SK-N-SH (cell line): ENCODE measurements at regions of chr7 and their contacts with region 1.

Region 1: DNA sequence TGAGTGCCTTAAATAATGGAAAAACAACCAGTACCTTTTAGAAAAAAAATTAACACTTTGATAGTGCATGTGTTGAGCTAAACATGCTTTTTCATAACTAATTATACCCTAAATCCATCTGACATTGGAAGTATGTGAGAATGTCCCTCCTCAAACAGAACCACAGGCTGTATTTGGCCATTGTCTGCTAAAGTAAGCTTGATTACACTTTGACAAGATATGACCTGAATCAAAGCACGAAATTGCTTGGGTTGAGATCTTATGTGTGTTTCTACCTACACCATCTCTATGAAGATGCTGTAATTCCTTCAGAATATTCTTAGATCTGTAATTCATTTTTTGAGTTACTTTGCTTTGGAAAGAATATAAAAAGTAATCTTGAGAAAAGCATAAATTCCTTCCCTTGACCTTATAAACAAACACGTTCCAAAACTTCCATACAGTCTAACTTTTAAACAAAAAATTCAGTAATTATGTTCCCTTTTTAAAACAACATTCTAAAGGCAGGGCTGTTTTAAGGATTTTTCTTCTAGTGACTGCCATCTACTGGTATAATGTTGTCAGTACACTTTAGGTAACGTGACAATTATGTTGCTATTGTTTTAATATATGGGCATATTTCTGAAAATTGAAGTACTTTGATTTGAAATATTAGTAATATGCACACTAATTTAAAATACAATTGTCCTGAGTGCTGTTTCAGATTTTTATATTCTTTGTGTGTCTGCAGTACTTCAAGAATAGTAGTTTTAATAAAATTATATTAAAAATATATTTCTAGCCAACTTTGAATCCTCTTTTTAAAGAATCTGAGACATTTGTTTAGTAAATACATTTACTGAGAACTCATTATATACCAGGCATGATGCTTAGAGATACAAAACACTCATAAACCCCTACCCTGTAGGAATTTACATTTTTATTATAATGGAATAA is 20.9 kb downstream of the CD36 start:
- DNase-seq: peak; percentile 31
- H3K4me3 ChIP-seq: no peak overlapping the region; a peak in 1 of 4 replicates
- H3K27ac ChIP-seq: peak overlapping the region in 1 of 2 experiments; percentile 8; a peak in 1 of 4 replicates
- H3K4me1 ChIP-seq: peaks cover 0 to 4% of the 10 kb centered on the region in 2 experiments; a peak in 1 of 4 replicates
- H3K27me3 ChIP-seq: no peaks in the 10 kb centered on the region
- CTCF ChIP-seq: peak; percentile 97
- EP300 ChIP-seq: no peak
- RAD21 ChIP-seq: peak; percentile 80

Region 2: GRCh38 chr7:80643336-80643915 is 16.0 kb before region 1 on chr7:
- CTCF ChIA-PET with region 1: interaction called, 11 read pairs
- POLR2A ChIA-PET with region 1: no interaction called
- DNase-seq: no peak
- H3K4me3 ChIP-seq: no peak overlapping the region
- H3K27ac ChIP-seq: no peak overlapping the region
- H3K4me1 ChIP-seq: peaks cover 0 to 9% of the 10 kb centered on the region in 2 experiments; a peak in 2 of 4 replicates
- H3K27me3 ChIP-seq: no peaks in the 10 kb centered on the region
- CTCF ChIP-seq: no peak
- EP300 ChIP-seq: no peak
- RAD21 ChIP-seq: no peak

Region 3: DNA sequence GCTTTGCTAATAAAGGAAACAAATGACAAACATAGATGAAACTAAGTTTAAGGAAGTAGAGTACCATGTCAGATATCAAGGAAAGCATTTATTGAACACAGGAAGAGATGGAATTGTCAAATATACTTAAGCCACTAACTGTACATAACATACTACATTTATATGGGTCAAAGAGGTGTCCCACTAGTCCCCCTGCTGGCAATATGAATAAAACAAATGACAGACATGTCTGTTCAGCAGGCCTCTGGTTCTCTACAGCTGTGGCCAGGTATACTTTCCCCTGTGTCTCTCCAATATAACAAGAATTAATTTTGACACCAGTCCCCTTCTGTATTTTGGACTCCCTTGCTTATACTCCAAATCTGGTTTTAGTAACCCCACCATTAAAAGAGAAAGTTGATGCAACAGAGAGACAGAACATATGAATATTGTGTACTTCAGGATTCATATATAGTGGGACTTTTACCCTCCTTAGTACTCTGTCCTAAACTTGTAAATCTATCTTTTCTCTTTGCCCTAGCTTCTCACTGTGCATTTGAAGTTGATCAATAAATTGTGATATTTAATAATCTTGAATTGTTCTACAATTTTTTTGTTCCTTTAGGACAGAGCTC is 22.0 kb after region 1 on chr7:
- CTCF ChIA-PET with region 1: interaction called, 32 read pairs
- POLR2A ChIA-PET with region 1: no interaction called
- DNase-seq: peak; percentile 38
- H3K4me3 ChIP-seq: no peak overlapping the region
- H3K27ac ChIP-seq: no peak overlapping the region
- H3K4me1 ChIP-seq: no peaks in the 10 kb centered on the region
- H3K27me3 ChIP-seq: no peaks in the 10 kb centered on the region
- CTCF ChIP-seq: peak; percentile 80
- EP300 ChIP-seq: no peak
- RAD21 ChIP-seq: peak; percentile 58

Region 4: GRCh38 chr7:80851894-80852476 is 192.6 kb after region 1 on chr7:
- CTCF ChIA-PET with region 1: no interaction called
- POLR2A ChIA-PET with region 1: no interaction called
- DNase-seq: no peak
- H3K4me3 ChIP-seq: no peak overlapping the region
- H3K27ac ChIP-seq: no peak overlapping the region
- H3K4me1 ChIP-seq: peaks cover 0 to 4% of the 10 kb centered on the region in 2 experiments; a peak in 2 of 4 replicates
- H3K27me3 ChIP-seq: no peaks in the 10 kb centered on the region
- CTCF ChIP-seq: no peak
- EP300 ChIP-seq: no peak
- RAD21 ChIP-seq: no peak

Region 5: GRCh38 chr7:81013083-81013817 is 353.9 kb after region 1 on chr7:
- CTCF ChIA-PET with region 1: no interaction called
- POLR2A ChIA-PET with region 1: no interaction called
- DNase-seq: no peak
- H3K4me3 ChIP-seq: no peak overlapping the region
- H3K27ac ChIP-seq: no peak overlapping the region
- H3K4me1 ChIP-seq: 0 out of 4 replicates have a peak, but pooled peaks cover 0 to 7% of the 10 kb centered on the region in 2 experiments
- H3K27me3 ChIP-seq: no peaks in the 10 kb centered on the region
- CTCF ChIP-seq: no peak
- EP300 ChIP-seq: no peak
- RAD21 ChIP-seq: no peak